Kidney (tissue), 22 donors: ENCODE measurements at regions of chr10 and their contacts with region 1.

Region 1: GRCh38 chr10:80158598-80159127 is 26.1 kb downstream of the PLAC9 start:
- DNase-seq: peak in 3 of 5 donors; percentile 29 to 92 (median 75)
- H3K4me3 ChIP-seq: no peak overlapping the region
- H3K27ac ChIP-seq: peak overlapping the region; percentile 64 to 90
- H3K4me1 ChIP-seq: peaks cover 0 to 24% (median 7%) of the 10 kb centered on the region in 3 donors
- H3K27me3 ChIP-seq: no peaks in the 10 kb centered on the region
- CTCF ChIP-seq: no peak

Region 2: DNA sequence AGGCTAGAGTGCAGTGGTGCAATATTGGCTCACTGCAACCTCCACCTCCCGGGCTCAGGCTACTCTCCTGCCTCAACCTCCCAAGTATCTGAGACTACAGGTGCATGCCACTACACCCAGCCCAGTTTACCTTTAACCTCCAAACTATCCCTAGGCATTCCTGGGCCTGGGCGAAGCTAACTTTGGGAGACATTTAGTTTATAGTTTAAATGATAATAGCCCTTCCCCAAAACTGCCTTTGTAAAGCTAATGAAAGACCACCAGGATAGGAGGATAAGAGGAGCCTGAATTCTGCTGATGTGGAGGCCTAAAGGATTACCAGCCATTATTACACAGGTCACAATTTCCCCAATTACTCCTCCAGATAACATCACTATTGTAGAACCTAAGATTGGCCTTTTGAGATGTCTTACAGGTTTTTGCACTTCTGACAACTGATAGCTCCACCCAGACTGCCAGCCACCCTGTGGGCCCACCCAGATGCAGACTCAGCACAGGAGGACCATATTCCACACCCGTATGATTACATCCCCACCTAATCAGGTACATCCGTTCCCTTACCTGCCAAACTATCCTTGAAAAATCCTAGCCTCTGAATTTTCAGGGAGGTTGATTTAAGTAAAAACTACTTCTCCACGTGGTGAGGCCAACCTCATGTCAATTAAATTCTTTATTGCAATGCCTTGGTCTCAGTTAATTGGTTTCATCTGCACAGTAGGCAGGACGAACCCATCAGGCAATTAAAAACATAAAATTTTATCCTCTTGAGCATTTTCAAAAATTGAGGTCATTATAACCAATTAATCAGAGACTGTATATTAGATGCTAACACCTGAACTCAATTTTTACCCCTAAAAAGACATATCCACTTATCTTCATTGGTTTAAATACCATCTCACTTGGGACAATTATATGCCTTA is 142.5 kb before region 1 on chr10:
- intact Hi-C with region 1: no loop called
- DNase-seq: no peak
- H3K4me3 ChIP-seq: no peak overlapping the region
- H3K27ac ChIP-seq: no peak overlapping the region
- H3K4me1 ChIP-seq: no peaks in the 10 kb centered on the region
- H3K27me3 ChIP-seq: no peaks in the 10 kb centered on the region
- CTCF ChIP-seq: no peak

Region 3: GRCh38 chr10:80205478-80206276 is 47.0 kb after region 1 on chr10 and contains the start of gene ANXA11:
- intact Hi-C with region 1: loop called (anchors 10 kb)
- DNase-seq: peak; percentile 82 to 95 (median 91)
- H3K4me3 ChIP-seq: peak within 1 kb of the TSS; percentile 86 to 92 (median 87)
- H3K27ac ChIP-seq: peak within 1 kb of the TSS; percentile 98 to 99
- H3K4me1 ChIP-seq: peaks cover 0 to 49% (median 37%) of the 10 kb centered on the region in 3 donors
- H3K27me3 ChIP-seq: no peaks in the 10 kb centered on the region
- CTCF ChIP-seq: no peak
- total RNA-seq, gene ANXA11: 435 TPM

Region 4: DNA sequence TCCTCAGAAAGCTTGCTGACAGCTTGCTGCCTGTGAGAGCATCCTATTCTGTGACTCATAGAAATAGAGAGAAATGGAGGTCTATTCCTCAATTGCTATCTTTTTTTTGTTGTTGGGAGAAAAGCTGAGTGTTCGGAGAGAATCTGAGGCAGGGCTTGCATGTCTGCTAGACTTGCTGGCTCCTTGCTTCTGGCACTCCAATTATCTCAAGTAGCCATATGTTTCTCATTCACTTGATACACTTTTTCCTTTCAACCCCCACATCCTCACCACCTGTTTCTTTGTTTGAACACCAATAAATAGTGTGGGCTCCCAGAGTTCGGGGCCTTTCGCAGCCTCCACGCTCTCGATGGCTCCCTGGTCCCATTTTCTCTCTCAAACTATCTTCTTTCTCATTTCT is 551.2 kb after region 1 on chr10:
- intact Hi-C with region 1: no loop called
- DNase-seq: no peak
- H3K4me3 ChIP-seq: no peak overlapping the region
- H3K27ac ChIP-seq: no peak overlapping the region
- H3K4me1 ChIP-seq: no peaks in the 10 kb centered on the region
- H3K27me3 ChIP-seq: no peaks in the 10 kb centered on the region
- CTCF ChIP-seq: no peak